Activated CD4-positive, alpha-beta T cell treated with anti-CD3 and anti-CD28 coated beads, Interleukin-2, amount 10 ng/mL, durations not matched to agents 24 days and 14 days (primary cell): ENCODE measurements at regions of chr15 and their contacts with region 1.

Region 1: GRCh38 chr15:40160689-40161688 is at the start of gene BUB1B:
- DNase-seq: peak; percentile 99
- H3K4me3 Mint-ChIP-seq: no peak within 1 kb of the TSS
- H3K27ac Mint-ChIP-seq: no peak within 1 kb of the TSS
- H3K4me1 Mint-ChIP-seq: peaks cover 13% of the 10 kb centered on the region
- H3K27me3 Mint-ChIP-seq: no peaks in the 10 kb centered on the region
- total RNA-seq, gene BUB1B: 69.3 and 73.1 TPM in 2 replicates

Region 2: DNA sequence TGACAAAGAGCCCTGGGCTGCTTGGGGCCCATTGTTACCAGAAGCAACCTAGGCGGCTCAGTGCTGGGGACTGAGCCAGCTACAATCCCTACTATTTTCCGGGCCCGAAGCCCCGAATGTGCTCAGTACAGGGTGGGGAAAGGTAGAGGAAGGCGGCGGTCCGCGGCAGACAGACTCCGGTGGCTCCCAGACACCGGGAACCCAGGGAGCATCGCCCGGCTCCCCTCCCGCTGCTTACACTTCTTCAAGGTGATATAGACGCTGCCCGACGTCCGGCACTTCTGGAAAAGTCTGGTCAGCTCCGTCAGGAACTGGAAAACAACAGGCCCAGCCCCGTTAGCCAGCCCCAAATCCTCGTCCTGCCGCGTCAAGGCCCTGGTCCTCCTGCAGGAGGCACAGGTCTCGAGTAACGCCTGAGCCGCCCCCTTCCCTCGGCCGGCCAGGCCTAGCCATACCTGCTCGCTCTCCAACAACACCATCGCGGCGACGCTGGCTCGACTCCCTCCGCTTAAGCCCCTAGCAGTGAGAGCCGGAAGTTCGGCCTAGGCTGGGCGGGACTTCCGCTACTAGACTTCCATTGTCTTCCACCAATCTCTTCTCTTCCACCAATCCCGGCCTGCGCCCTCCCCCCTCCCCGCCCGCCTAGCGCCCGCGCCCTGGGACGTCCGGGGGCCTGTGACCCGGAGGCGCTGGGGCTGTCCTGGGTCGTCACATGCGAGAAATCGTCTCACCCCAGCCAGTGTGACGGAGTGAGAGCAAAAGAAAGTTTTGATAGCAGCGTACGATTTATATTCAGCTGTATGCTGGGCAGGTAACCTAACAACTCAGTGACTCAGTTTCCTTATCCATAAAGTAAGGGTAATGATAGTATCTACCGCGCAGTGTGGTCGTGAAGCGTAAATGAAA is 122.1 kb before region 1 on chr15 and contains the start of gene SRP14:
- intact Hi-C with region 1: loop called (anchors 2 kb)
- DNase-seq: peak; percentile 97
- H3K4me3 Mint-ChIP-seq: peak within 1 kb of the TSS; percentile 99
- H3K27ac Mint-ChIP-seq: peak within 1 kb of the TSS; percentile 97
- H3K4me1 Mint-ChIP-seq: peaks cover 37% of the 10 kb centered on the region
- H3K27me3 Mint-ChIP-seq: no peaks in the 10 kb centered on the region
- total RNA-seq, gene SRP14: 153 and 155 TPM in 2 replicates

Region 3: GRCh38 chr15:40098489-40099261 is 62.3 kb before region 1 on chr15:
- intact Hi-C with region 1: no loop called
- DNase-seq: peak; percentile 92
- H3K4me3 Mint-ChIP-seq: peak overlapping the region; percentile 79
- H3K27ac Mint-ChIP-seq: peak overlapping the region; percentile 97
- H3K4me1 Mint-ChIP-seq: peaks cover 79% of the 10 kb centered on the region
- H3K27me3 Mint-ChIP-seq: no peaks in the 10 kb centered on the region

Region 4: GRCh38 chr15:40108855-40109735 is 51.9 kb before region 1 on chr15 and contains the start of gene BMF:
- intact Hi-C with region 1: loop called (anchors 1 kb)
- DNase-seq: peak; percentile 99
- H3K4me3 Mint-ChIP-seq: peak within 1 kb of the TSS; percentile 95
- H3K27ac Mint-ChIP-seq: peak within 1 kb of the TSS; percentile 85
- H3K4me1 Mint-ChIP-seq: peaks cover 53% of the 10 kb centered on the region
- H3K27me3 Mint-ChIP-seq: peaks cover 10% of the 10 kb centered on the region
- total RNA-seq, gene BMF: 8.4 and 9.1 TPM in 2 replicates

Region 5: GRCh38 chr15:40197434-40197833 is 36.4 kb after region 1 on chr15:
- intact Hi-C with region 1: loop called (anchors 5 kb)
- DNase-seq: peak; percentile 67
- H3K4me3 Mint-ChIP-seq: peak overlapping the region; percentile 44
- H3K27ac Mint-ChIP-seq: peak overlapping the region; percentile 70
- H3K4me1 Mint-ChIP-seq: peaks cover 40% of the 10 kb centered on the region
- H3K27me3 Mint-ChIP-seq: no peaks in the 10 kb centered on the region